PC-3 (cell line): ENCODE measurements at regions of chr5 and their contacts with region 1.

Region 1: GRCh38 chr5:55982957-55983381 is 11.8 kb downstream of the IL6ST start:
- DNase-seq: peak; percentile 11
- ATAC-seq: peak; percentile 51
- H3K4me3 ChIP-seq: no peak overlapping the region
- H3K27ac ChIP-seq: no peak overlapping the region
- H3K4me1 ChIP-seq: no peaks in the 10 kb centered on the region
- H3K27me3 ChIP-seq: no peaks in the 10 kb centered on the region
- CTCF ChIP-seq: no peak

Region 2: DNA sequence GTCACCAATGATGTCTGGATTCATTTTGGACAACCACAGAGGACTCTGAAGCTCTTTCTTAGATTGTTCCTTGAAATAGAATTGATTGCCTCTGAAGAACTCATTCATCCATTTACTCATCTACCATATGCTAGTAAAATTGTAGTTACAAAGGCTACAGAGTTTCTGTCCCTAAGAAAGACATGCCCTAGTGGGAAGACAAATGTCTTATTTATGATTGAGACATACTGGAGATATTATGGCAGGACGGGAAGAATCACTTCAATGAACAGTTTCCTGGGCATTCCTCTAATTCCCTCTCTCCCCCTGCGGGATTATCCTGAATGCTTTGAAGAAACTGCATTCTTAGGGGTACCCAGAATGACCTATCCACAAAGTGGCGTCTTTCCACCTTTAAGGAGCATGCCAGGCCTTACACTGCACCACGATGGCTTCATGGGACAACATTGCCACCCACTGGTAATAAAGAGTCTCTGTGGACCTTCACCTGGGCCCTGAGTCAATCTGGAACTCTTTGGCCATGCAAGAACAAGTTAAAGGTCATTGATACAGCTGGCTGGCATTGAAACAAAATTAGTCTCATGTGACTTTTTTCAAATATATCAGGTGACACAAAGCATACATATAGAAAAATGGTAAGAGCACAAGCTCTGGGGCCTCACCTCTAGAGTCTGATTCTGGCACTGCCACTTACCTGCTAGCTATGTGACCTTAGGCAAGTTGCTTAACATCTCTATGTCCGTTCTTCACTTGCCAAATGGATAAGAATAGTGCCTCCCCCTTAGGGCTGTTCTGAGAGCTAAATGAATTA is 218.1 kb after region 1 on chr5:
- CTCF ChIA-PET with region 1: no interaction called
- POLR2A ChIA-PET with region 1: no interaction called
- intact Hi-C with region 1: loop called (anchors 1 kb)
- DNase-seq: peak; percentile 71
- ATAC-seq: peak; percentile 99
- H3K4me3 ChIP-seq: no peak overlapping the region
- H3K27ac ChIP-seq: no peak overlapping the region
- H3K4me1 ChIP-seq: peaks cover 5% of the 10 kb centered on the region; the same call in 1 of the 2 replicates
- H3K27me3 ChIP-seq: no peaks in the 10 kb centered on the region
- CTCF ChIP-seq: peak; percentile 85